ENCODE measurements at regions of chr13 and their contacts with region 1.

Region 1: DNA sequence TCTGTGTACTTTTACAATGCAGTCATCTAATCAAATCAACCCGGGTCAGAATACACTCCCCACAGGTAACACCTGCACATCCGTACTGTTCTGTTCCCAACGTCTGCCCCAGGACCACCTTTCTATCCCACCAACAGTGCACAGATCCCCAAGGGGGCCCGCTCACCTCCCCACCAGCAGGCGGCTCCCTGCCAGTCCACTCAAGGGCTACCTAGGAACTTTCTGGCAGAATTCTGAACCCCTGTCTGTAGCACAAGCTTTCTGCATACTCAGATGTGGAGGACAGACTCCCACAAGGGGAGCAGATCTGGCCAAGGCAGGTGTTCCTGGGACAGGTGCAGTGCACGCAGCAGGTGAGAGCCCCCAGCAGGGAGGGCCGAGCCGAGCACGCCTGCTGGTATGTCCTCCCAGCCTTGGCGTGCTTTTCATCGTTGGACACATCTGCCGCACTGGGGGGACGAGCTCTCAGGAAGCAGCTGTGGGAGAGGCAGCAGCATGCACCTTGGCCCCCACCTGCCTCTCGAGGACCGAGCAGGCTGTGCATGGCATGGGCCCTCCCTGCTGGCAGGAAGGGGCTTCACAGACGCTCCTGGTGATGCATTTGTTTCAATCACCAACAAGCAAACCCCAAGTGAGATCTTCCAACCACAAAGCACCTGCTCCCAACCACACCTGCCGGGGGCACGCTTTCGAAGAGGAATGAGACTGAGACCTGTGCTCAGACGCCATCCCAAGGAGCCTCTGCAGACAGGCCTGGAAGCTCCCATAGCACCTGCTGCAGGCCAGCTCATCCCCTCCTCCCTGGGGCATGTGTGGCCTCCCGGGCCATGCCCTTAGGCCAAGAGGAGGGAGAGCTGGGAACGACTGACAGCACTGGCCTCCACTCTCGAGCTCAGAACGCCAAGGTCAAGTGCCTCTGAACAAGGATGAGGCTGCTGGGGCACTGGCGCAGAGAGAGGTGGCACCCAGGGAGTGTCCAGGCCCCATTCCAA is 35.9 kb downstream of the RAB20 start:
- DNase-seq: peak; percentile 72 to 90
- H3K4me3 ChIP-seq: no peak overlapping the region
- H3K27ac ChIP-seq: peak overlapping the region; percentile 71
- H3K4me1 ChIP-seq: peaks cover 79% of the 10 kb centered on the region
- H3K27me3 ChIP-seq: no peaks in the 10 kb centered on the region
- CTCF ChIP-seq: no peak

Region 2: GRCh38 chr13:110347535-110348308 is 177.9 kb before region 1 on chr13:
- CTCF ChIA-PET with region 1: no interaction called
- POLR2A ChIA-PET with region 1: no interaction called
- intact Hi-C with region 1: loop called (anchors 2 kb)
- DNase-seq: peak; percentile 84 to 98
- H3K4me3 ChIP-seq: peak overlapping the region; percentile 9; the same call in 1 of the 2 replicates
- H3K27ac ChIP-seq: peak overlapping the region; percentile 83
- H3K4me1 ChIP-seq: peaks cover 63% of the 10 kb centered on the region
- H3K27me3 ChIP-seq: no peaks in the 10 kb centered on the region
- CTCF ChIP-seq: no peak

Region 3: DNA sequence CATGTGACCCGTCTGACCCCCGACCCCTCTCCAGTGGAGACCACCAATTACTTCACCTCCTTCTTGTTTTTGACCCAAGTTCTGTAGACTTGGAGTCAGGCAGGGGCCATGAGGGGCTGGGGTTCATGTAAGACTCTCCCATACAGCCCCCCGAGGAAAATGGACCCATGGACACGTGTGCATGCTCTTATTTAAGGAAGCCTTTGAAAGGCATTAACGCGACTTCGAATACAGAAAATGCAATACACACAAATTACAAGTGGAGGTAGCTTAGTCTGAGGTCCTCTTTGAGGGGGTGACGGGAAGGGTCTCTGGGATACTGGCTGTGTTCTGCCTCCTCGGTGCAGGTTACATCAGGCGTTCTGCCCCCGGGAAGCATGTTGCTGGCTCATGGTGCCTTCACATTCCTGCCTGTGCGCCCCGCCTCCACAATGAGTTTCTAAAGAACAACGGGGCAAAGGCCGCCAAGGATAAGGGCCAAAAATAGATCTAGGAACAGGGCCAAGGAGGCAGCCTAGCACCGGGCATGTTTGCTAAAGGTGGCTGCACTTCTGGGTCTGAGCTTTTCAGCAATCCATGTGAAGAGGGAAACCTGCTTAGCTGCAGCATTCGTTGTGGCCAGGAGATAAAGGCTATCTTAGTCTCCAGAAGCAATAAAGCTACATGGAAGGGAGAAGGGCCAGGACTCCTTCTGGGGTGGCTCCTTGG is 18.6 kb before region 1 on chr13:
- CTCF ChIA-PET with region 1: interaction called, 6 read pairs
- POLR2A ChIA-PET with region 1: interaction called, 8 read pairs
- intact Hi-C with region 1: loop called (anchors 1 kb)
- DNase-seq: peak; percentile 77 to 93
- H3K4me3 ChIP-seq: peak overlapping the region; percentile 36; the same call in 1 of the 2 replicates
- H3K27ac ChIP-seq: peak overlapping the region; percentile 84
- H3K4me1 ChIP-seq: peaks cover 27% of the 10 kb centered on the region
- H3K27me3 ChIP-seq: no peaks in the 10 kb centered on the region
- CTCF ChIP-seq: no peak

Region 4: DNA sequence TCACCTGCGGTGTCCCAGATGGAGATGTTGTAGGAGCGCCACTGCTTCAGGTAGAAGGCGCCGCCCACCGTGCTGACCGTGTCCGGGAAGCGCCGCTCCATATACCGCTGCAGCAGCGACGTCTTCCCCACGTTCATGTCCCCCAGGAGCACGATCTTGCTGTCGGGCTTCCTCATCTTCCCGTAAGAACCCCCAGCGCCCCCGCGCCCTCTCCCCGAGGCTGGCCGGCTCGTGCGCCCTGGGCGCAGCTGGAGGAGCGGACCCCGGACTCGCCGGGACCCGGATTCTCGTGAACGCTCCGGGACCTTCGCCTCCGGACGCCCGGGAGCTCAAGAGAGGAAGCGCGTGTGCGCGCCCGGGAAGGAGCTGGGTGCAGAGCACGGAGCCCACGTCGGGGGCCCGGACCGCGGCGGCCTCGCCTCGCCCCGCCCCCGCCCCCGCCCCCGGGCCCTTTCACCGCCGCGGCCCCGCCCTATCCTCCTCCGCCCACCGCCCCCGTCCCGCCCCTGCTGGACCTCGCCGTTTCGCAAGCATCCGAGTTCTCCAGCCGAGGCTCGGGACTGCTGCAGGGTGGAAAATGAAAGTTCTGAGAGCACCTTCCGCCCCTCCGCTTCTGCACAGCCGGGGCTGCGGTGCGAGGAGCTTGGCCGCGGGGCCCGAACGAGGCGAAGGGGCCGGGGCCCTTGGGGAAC is 35.9 kb after region 1 on chr13 and contains the start of gene RAB20:
- CTCF ChIA-PET with region 1: interaction called, 6 read pairs
- POLR2A ChIA-PET with region 1: interaction called, 28 read pairs
- intact Hi-C with region 1: loop called (anchors 1 kb)
- DNase-seq: peak; percentile 73 to 78
- H3K4me3 ChIP-seq: peak within 1 kb of the TSS; percentile 91
- H3K27ac ChIP-seq: peak within 1 kb of the TSS; percentile 72
- H3K4me1 ChIP-seq: peaks cover 58% of the 10 kb centered on the region
- H3K27me3 ChIP-seq: no peaks in the 10 kb centered on the region
- CTCF ChIP-seq: no peak
- total RNA-seq, gene RAB20: 31.9 and 41.0 TPM in 2 replicates

Region 5: GRCh38 chr13:110615322-110616102 is 89.9 kb after region 1 on chr13 and contains the start of gene NAXD:
- CTCF ChIA-PET with region 1: no interaction called
- POLR2A ChIA-PET with region 1: no interaction called
- intact Hi-C with region 1: loop called (anchors 1 kb)
- DNase-seq: peak; percentile 88 to 89
- H3K4me3 ChIP-seq: peak within 1 kb of the TSS; percentile 90
- H3K27ac ChIP-seq: peak within 1 kb of the TSS; percentile 65
- H3K4me1 ChIP-seq: peaks cover 28% of the 10 kb centered on the region
- H3K27me3 ChIP-seq: no peaks in the 10 kb centered on the region
- CTCF ChIP-seq: peak; percentile 7; the same call in 1 of the 2 replicates
- total RNA-seq, gene NAXD: 30.2 and 35.2 TPM in 2 replicates

Region 6: DNA sequence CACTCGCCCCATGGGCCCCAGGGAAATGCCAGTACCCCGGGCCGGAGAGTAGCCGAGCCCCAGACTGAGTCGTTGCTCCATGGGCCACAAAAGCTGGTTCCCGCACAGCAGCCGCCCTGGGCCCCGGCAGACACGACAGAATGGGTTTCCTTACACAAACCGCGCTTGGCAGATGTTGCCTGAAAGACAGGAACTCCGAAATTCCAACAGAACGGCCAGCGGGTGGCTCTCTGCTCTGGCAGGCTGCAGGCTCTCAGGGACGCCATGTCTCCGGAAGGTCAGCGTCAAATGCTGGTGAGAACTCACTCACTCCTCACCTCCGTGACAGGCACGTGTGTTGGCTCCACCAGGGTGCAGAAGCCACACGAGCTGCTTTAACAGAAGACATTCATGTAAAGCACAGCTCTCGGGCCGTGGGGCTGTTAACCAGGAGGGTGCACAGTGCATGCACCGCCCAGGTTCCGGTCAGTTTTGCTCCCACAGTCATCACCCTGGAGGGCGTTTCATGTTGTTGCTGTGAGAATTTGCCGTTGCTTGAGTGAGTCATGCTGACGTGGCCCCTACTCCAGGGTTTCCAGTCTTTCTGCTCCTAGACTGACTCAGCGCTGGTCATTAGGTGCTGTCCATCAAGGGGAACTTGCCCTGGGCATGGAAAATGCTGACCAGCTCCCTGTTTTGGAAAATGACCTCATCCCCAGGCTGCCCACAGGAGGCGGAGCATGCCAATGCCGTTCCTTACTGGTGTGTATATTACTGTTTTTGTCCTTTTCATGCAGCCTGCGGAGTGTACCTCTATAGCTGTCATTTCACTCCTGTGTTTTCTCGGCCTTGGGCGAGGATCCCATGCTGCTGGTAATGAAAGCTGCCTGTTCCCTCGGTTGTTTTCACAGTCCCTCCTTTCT is 344.4 kb after region 1 on chr13:
- CTCF ChIA-PET with region 1: no interaction called
- POLR2A ChIA-PET with region 1: no interaction called
- intact Hi-C with region 1: loop called (anchors 1 kb)
- DNase-seq: peak; percentile 96 to 99
- H3K4me3 ChIP-seq: peak overlapping the region; percentile 65
- H3K27ac ChIP-seq: peak overlapping the region; percentile 97
- H3K4me1 ChIP-seq: peaks cover 28% of the 10 kb centered on the region
- H3K27me3 ChIP-seq: no peaks in the 10 kb centered on the region
- CTCF ChIP-seq: no peak